ENCODE measurements at regions of chr9 and their contacts with region 1.

Region 1: DNA sequence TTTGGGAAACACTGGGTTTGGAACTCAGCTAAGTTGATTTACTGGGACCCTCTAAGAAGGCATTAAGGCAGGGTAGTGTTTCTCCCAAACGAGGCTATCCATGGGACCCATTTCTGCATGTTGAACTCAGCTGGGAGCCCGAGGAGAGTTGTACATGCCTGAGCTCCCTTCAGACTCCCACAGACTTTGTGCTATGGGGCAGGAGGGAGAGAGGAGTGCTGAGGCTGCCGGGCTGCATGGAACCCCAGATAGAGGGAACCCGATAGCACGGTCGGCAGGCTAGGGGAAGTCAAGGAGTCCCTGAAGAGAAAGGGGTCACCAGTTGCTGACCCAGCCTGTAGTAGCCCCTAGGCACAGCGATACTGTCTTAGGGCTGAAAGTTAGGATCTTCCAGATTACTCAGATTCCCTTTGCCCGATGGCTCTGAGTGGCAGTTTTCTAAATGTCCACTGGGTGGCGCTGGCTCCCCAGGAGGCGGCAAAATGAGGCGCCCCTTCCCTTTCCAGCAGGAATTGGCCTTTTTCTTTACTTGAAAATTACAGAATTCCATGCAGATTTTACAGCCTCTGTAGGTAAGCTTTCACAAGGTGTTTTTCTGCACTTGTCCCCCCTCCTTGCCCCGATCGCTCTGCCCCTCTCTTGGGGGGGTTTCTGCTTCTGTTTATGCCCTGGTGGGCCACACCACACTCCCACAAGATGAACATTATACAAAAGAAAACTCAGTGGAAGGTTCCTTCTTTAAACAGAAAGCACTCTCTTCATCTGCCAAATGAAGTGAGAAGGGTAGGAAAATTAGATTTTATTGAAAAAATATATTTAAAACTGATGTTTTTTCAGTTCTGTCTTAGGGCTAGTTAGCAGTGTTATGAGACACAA is 17.8 kb downstream of the NANS start:
- DNase-seq: peak; percentile 33
- H3K4me3 ChIP-seq: no peak overlapping the region
- H3K27ac ChIP-seq: no peak overlapping the region
- H3K4me1 ChIP-seq: no peaks in the 10 kb centered on the region
- H3K27me3 ChIP-seq: no peaks in the 10 kb centered on the region
- CTCF ChIP-seq: peak; percentile 93 to 94

Region 2: DNA sequence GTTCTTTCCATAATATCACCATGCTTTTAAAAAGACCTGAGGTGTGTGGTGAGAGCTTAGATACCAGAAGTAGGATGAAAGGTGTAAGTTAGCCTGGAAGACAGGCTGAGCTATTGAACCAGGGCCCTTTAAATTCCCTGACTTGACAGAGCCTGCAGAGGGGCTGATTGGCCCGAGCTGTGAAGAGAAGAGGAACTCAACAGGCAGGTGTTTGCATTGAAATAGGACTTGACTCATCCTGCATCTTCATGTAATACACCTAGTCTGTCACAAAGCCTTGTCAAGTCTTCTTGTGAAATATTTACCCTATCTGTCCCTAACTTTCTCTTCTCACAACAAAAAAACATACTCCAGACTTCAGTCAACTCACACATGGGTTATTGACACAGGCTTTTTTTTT is 107.9 kb before region 1 on chr9:
- CTCF ChIA-PET with region 1: interaction called, 10 read pairs
- dilution Hi-C with region 1: no loop called
- in situ Hi-C with region 1: no loop called
- intact Hi-C with region 1: no loop called
- DNase-seq: no peak
- H3K4me3 ChIP-seq: no peak overlapping the region
- H3K27ac ChIP-seq: no peak overlapping the region
- H3K4me1 ChIP-seq: no peaks in the 10 kb centered on the region
- H3K27me3 ChIP-seq: no peaks in the 10 kb centered on the region
- CTCF ChIP-seq: no peak

Region 3: GRCh38 chr9:98168941-98169488 is 94.7 kb after region 1 on chr9:
- CTCF ChIA-PET with region 1: no interaction called
- dilution Hi-C with region 1: loop called (anchors 5 kb)
- in situ Hi-C with region 1: no loop called
- intact Hi-C with region 1: no loop called
- DNase-seq: peak; percentile 70
- H3K4me3 ChIP-seq: no peak overlapping the region
- H3K27ac ChIP-seq: no peak overlapping the region
- H3K4me1 ChIP-seq: peaks cover 23% of the 10 kb centered on the region
- H3K27me3 ChIP-seq: no peaks in the 10 kb centered on the region
- CTCF ChIP-seq: no peak

Region 4: DNA sequence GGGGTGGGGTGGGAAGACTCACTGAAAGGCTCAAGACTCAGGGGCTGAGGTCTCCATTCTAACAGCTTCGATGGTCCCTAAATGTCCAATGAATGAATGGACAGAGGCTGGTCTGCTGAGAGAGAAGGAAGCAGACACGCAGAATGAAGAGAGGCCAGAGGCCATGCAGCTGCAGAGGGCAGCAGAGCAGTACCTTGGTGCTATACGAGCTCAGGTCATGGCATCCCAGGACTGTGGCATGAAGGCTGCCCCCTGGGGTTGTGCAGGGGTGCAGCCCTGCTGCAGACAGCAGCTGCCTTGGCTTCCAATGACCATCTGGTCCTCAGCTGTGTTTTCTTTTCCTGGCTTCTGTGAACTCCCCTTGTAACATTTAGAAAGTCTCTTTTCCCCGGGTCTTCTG is 133.3 kb after region 1 on chr9:
- CTCF ChIA-PET with region 1: no interaction called
- dilution Hi-C with region 1: no loop called
- in situ Hi-C with region 1: no loop called
- intact Hi-C with region 1: loop called (anchors 5 kb)
- DNase-seq: no peak
- H3K4me3 ChIP-seq: no peak overlapping the region
- H3K27ac ChIP-seq: no peak overlapping the region
- H3K4me1 ChIP-seq: no peaks in the 10 kb centered on the region
- H3K27me3 ChIP-seq: no peaks in the 10 kb centered on the region
- CTCF ChIP-seq: no peak

Region 5: GRCh38 chr9:98248737-98249474 is 174.6 kb after region 1 on chr9:
- CTCF ChIA-PET with region 1: no interaction called
- dilution Hi-C with region 1: loop called (anchors 10 kb)
- in situ Hi-C with region 1: loop called in 1 of 2 experiments (anchors 10 kb)
- intact Hi-C with region 1: no loop called
- DNase-seq: peak; percentile 97
- H3K4me3 ChIP-seq: no peak overlapping the region
- H3K27ac ChIP-seq: peak overlapping the region; percentile 78
- H3K4me1 ChIP-seq: peaks cover 72% of the 10 kb centered on the region
- H3K27me3 ChIP-seq: no peaks in the 10 kb centered on the region
- CTCF ChIP-seq: no peak

Region 6: DNA sequence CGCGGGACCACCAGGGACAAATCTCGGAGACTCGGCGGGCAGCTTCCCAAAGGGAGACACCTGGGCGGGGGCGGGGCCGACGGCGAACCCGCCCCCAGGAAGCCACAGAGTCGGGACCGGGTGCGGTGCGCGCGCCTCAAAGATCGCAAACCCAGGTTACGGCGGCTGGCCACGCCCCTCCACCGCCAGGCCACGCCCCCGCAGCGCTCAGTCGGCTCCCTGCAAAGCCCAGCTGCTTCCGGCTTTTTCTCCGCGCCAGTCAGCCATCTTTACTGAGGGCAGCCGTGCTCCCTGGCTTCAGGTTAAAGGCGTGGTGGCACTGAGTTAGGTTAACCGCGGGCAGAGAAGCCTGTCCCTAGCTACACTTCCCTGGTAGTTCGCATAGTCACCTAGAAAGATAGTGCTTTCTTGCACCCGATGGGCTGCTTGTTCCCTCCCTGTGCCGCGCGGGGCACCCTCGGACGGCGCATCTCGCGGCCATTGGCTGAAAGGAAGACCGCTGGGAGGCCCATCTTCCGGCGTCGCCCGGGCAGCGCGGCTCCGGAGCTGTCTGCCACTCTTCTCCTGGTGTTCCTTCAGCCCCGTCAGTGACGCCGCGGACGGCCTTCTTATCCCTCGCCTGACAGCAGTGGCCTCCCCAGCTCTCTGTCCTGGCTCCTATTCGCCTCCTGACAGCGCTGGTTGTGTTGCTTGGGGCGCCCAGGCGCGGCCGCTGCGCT is 181.4 kb after region 1 on chr9 and contains the start of gene TBC1D2:
- CTCF ChIA-PET with region 1: no interaction called
- dilution Hi-C with region 1: no loop called
- in situ Hi-C with region 1: loop called (anchors 5 to 10 kb)
- intact Hi-C with region 1: no loop called
- DNase-seq: peak; percentile 94
- H3K4me3 ChIP-seq: peak within 1 kb of the TSS; percentile 69 to 97 (median 93)
- H3K27ac ChIP-seq: peak within 1 kb of the TSS; percentile 72
- H3K4me1 ChIP-seq: peaks cover 39% of the 10 kb centered on the region
- H3K27me3 ChIP-seq: no peaks in the 10 kb centered on the region
- CTCF ChIP-seq: peak in 1 of 2 donors; percentile 35
- total RNA-seq, gene TBC1D2: 86.7 to 98.2 TPM

Region 7: GRCh38 chr9:98263482-98264357 is 189.4 kb after region 1 on chr9:
- CTCF ChIA-PET with region 1: no interaction called
- dilution Hi-C with region 1: no loop called
- in situ Hi-C with region 1: loop called (anchors 5 to 10 kb)
- intact Hi-C with region 1: loop called (anchors 1 kb)
- DNase-seq: peak; percentile 51
- H3K4me3 ChIP-seq: no peak overlapping the region
- H3K27ac ChIP-seq: no peak overlapping the region
- H3K4me1 ChIP-seq: no peaks in the 10 kb centered on the region
- H3K27me3 ChIP-seq: peaks cover 2% of the 10 kb centered on the region
- CTCF ChIP-seq: peak; percentile 98

Region 8: GRCh38 chr9:98477884-98478283 is 403.5 kb after region 1 on chr9:
- CTCF ChIA-PET with region 1: no interaction called
- dilution Hi-C with region 1: no loop called
- in situ Hi-C with region 1: no loop called
- intact Hi-C with region 1: no loop called
- DNase-seq: no peak
- H3K4me3 ChIP-seq: no peak overlapping the region
- H3K27ac ChIP-seq: no peak overlapping the region
- H3K4me1 ChIP-seq: peaks cover 18% of the 10 kb centered on the region
- H3K27me3 ChIP-seq: no peaks in the 10 kb centered on the region
- CTCF ChIP-seq: no peak